GM12878 (cell line): ENCODE measurements at regions of chr2 and their contacts with region 1.

Region 1: DNA sequence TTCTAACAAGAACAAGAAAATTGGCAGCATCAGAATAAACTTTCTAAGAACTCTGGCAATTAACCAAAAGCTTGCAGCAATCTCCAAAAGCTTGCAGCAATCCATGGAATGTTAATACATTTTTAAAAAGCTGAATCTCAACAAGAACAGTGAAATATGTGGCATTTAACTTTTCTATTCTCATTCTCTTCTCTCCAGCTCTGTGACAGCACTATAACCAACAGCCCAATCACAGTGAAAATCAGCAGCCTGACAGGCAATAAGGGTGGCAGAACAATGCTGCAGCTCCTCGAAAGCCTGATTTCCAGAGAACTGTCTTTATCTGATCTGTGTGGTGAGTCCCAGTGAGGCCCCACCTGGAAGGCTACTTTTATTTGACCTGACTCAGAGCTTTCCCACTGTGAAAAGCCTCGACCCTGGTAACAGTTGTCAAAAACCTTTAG is 60.0 kb downstream of the TMEM131 start:
- DNase-seq: no peak
- ATAC-seq: peak; percentile 25
- H3K4me3 ChIP-seq: peak overlapping the region; percentile 11; the same call in 1 of the 2 replicates
- H3K27ac ChIP-seq: peak overlapping the region; percentile 63
- H3K4me1 ChIP-seq: peaks cover 55% of the 10 kb centered on the region
- H3K27me3 ChIP-seq: no peaks in the 10 kb centered on the region
- CTCF ChIP-seq: no peak
- EP300 ChIP-seq: no peak
- POLR2A ChIP-seq: no peak
- RAD21 ChIP-seq: no peak

Region 2: GRCh38 chr2:97747716-97748115 is 188.0 kb before region 1 on chr2:
- CTCF ChIA-PET with region 1: no interaction called
- POLR2A ChIA-PET with region 1: no interaction called
- RAD21 ChIA-PET with region 1: no interaction called
- SMC1A ChIA-PET with region 1: no interaction called
- in situ Hi-C with region 1: no loop called
- intact Hi-C with region 1: no loop called
- DNase-seq: no peak
- ATAC-seq: no peak
- H3K4me3 ChIP-seq: no peak overlapping the region
- H3K27ac ChIP-seq: no peak overlapping the region
- H3K4me1 ChIP-seq: peaks cover 8% of the 10 kb centered on the region
- H3K27me3 ChIP-seq: no peaks in the 10 kb centered on the region
- CTCF ChIP-seq: no peak
- EP300 ChIP-seq: no peak
- POLR2A ChIP-seq: no peak
- RAD21 ChIP-seq: no peak

Region 3: GRCh38 chr2:97890093-97890492 is 45.6 kb before region 1 on chr2:
- CTCF ChIA-PET with region 1: no interaction called
- POLR2A ChIA-PET with region 1: no interaction called
- RAD21 ChIA-PET with region 1: no interaction called
- SMC1A ChIA-PET with region 1: no interaction called
- in situ Hi-C with region 1: no loop called
- intact Hi-C with region 1: no loop called
- DNase-seq: no peak
- ATAC-seq: no peak
- H3K4me3 ChIP-seq: no peak overlapping the region
- H3K27ac ChIP-seq: no peak overlapping the region
- H3K4me1 ChIP-seq: no peaks in the 10 kb centered on the region
- H3K27me3 ChIP-seq: no peaks in the 10 kb centered on the region
- CTCF ChIP-seq: no peak
- EP300 ChIP-seq: no peak
- POLR2A ChIP-seq: no peak
- RAD21 ChIP-seq: no peak

Region 4: GRCh38 chr2:97911206-97911921 is 24.4 kb before region 1 on chr2:
- CTCF ChIA-PET with region 1: interaction called, 8 read pairs
- POLR2A ChIA-PET with region 1: interaction called, 13 read pairs
- RAD21 ChIA-PET with region 1: interaction called, 36 read pairs
- SMC1A ChIA-PET with region 1: interaction called, 55 read pairs
- in situ Hi-C with region 1: no loop called
- intact Hi-C with region 1: no loop called
- DNase-seq: peak; percentile 84
- ATAC-seq: peak; percentile 74
- H3K4me3 ChIP-seq: no peak overlapping the region
- H3K27ac ChIP-seq: peak overlapping the region; percentile 64
- H3K4me1 ChIP-seq: peaks cover 60% of the 10 kb centered on the region
- H3K27me3 ChIP-seq: no peaks in the 10 kb centered on the region
- CTCF ChIP-seq: no peak
- EP300 ChIP-seq: peak in 1 of 2 experiments; percentile 86; a peak in 3 of 4 replicates
- POLR2A ChIP-seq: no peak
- RAD21 ChIP-seq: peak; percentile 15; the same call in 1 of the 2 replicates

Region 5: GRCh38 chr2:97919858-97920257 is 15.9 kb before region 1 on chr2:
- CTCF ChIA-PET with region 1: interaction called, 3 read pairs
- POLR2A ChIA-PET with region 1: interaction called, 9 read pairs
- RAD21 ChIA-PET with region 1: interaction called, 30 read pairs
- SMC1A ChIA-PET with region 1: interaction called, 55 read pairs
- in situ Hi-C with region 1: no loop called
- intact Hi-C with region 1: no loop called
- DNase-seq: no peak
- ATAC-seq: no peak
- H3K4me3 ChIP-seq: no peak overlapping the region
- H3K27ac ChIP-seq: no peak overlapping the region
- H3K4me1 ChIP-seq: peaks cover 6% of the 10 kb centered on the region; the same call in 1 of the 2 replicates
- H3K27me3 ChIP-seq: no peaks in the 10 kb centered on the region
- CTCF ChIP-seq: no peak
- EP300 ChIP-seq: no peak
- POLR2A ChIP-seq: no peak
- RAD21 ChIP-seq: no peak

Region 6: GRCh38 chr2:97950329-97951154 is 14.8 kb after region 1 on chr2:
- CTCF ChIA-PET with region 1: interaction called, 13 read pairs
- POLR2A ChIA-PET with region 1: interaction called, 10 read pairs
- RAD21 ChIA-PET with region 1: interaction called, 28 read pairs
- SMC1A ChIA-PET with region 1: interaction called, 36 read pairs
- in situ Hi-C with region 1: no loop called
- intact Hi-C with region 1: no loop called
- DNase-seq: no peak
- ATAC-seq: no peak
- H3K4me3 ChIP-seq: no peak overlapping the region
- H3K27ac ChIP-seq: no peak overlapping the region
- H3K4me1 ChIP-seq: peaks cover 38% of the 10 kb centered on the region
- H3K27me3 ChIP-seq: no peaks in the 10 kb centered on the region
- CTCF ChIP-seq: no peak
- EP300 ChIP-seq: no peak
- POLR2A ChIP-seq: no peak
- RAD21 ChIP-seq: no peak

Region 7: DNA sequence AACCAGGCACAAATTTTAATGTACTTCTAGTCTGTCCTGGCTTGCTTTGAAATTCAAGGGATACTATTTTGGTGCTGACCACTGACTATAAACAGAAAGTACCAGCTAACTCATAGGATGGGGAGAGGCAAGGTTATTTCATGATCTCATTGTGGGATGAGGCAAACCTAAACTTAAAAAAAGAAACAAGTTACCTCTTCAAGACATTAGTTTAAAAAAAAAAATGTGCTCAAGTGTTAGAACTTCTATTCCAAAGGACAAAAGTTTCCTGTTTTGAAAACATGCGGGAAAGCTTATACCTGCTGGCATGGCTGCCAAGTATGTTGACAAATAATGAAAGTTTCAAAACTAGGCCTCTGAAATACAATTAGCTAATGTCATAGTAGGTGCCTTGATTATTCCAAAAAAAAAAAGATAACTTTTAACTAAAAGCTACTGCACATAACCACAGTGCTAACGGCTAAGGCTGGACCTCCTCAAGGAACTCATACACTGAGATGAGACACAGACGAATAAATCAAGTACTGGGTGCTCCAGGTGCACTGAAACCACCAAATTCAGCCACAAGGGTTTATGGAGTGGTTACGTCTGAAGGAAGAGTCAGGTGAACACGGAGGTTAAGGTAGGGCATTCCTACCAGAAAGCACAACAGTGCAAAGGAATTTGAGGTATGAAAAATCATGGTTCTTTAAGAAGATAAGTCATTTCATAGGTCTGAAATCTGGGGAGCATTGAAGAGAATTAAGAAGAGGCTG is 21.9 kb after region 1 on chr2:
- CTCF ChIA-PET with region 1: interaction called, 13 read pairs
- POLR2A ChIA-PET with region 1: interaction called, 11 read pairs
- RAD21 ChIA-PET with region 1: interaction called, 28 read pairs
- SMC1A ChIA-PET with region 1: interaction called, 37 read pairs
- in situ Hi-C with region 1: no loop called
- intact Hi-C with region 1: no loop called
- DNase-seq: no peak
- ATAC-seq: peak; percentile 58
- H3K4me3 ChIP-seq: peak overlapping the region; percentile 39; the same call in 1 of the 2 replicates
- H3K27ac ChIP-seq: 0 out of 2 replicates have a peak overlapping the region, but pooled peaks have one; percentile 10
- H3K4me1 ChIP-seq: peaks cover 34% of the 10 kb centered on the region
- H3K27me3 ChIP-seq: no peaks in the 10 kb centered on the region
- CTCF ChIP-seq: no peak
- EP300 ChIP-seq: no peak
- POLR2A ChIP-seq: no peak
- RAD21 ChIP-seq: no peak

Region 8: DNA sequence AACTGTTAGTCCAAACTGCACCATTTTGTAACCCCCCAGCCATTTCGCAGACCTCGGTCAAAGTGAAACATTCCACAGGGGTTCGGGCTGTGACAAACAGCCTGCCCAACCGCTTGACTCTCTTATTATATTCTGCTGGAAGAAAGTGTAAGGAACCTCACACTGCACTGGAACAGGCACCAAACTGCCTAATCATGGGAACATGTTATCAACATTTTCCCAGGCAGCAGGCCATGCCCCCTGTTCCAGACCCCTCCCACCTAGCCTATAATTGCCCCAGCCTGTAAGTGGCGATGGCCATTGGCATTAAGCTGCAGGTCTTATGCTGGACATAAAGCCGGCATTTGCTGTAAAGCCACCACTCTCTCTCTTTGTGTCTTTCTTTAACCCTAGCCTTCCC is 1302.9 kb after region 1 on chr2:
- CTCF ChIA-PET with region 1: no interaction called
- POLR2A ChIA-PET with region 1: no interaction called
- RAD21 ChIA-PET with region 1: no interaction called
- SMC1A ChIA-PET with region 1: no interaction called
- in situ Hi-C with region 1: no loop called
- intact Hi-C with region 1: no loop called
- DNase-seq: no peak
- ATAC-seq: no peak
- H3K4me3 ChIP-seq: no peak overlapping the region
- H3K27ac ChIP-seq: no peak overlapping the region
- H3K4me1 ChIP-seq: no peaks in the 10 kb centered on the region
- H3K27me3 ChIP-seq: no peaks in the 10 kb centered on the region
- CTCF ChIP-seq: no peak
- EP300 ChIP-seq: no peak
- POLR2A ChIP-seq: no peak
- RAD21 ChIP-seq: no peak